WTC11 (cell line): ENCODE measurements at regions of chr16 and their contacts with region 1.

Region 1: DNA sequence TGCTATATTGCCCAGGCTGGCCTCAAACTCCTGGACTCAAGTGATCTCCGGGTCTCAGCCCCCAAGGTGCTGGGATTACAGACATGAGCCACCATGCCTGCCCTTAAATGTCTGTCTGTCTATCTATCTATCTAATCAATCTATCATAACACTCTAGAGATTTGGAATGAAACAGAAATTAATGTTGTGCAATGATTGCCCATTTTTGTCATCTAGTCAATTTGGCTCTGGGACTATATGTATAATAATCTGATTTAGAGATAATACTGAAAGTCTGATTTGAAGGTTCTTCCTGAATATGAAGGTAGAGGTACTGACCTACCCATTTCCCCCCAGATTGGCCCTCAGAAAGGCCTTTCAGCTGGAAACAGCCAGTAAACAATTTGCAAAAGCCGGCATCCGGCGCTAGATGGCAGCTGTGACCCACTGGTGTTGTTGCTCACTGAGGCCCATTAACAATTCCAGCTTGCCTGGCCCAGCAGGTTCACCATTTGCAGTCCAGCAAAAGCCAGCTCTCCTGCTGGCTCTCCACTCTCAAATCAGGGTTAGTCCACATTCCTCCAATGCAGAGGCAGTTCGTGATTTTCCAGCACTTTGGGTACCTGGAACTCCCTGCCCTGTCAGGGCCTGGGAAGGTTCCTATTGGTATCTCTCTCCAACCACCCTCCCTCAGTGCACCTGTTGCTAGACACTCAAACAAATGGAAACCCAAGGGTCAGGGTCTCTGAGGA is 22.9 kb upstream of the C16orf87 start:
- DNase-seq: peak; percentile 90
- ATAC-seq: peak; percentile 87
- H3K4me3 Mint-ChIP-seq: no peak overlapping the region
- H3K27ac Mint-ChIP-seq: peak overlapping the region; percentile 85; the same call in 1 of the 2 replicates
- H3K4me1 Mint-ChIP-seq: peaks cover 27% of the 10 kb centered on the region
- H3K27me3 Mint-ChIP-seq: no peaks in the 10 kb centered on the region
- CTCF ChIP-seq: peak; percentile 46

Region 2: GRCh38 chr16:46673320-46674013 is 180.4 kb before region 1 on chr16:
- CTCF ChIA-PET with region 1: interaction called, 22 read pairs
- POLR2A ChIA-PET with region 1: no interaction called
- DNase-seq: peak; percentile 62
- ATAC-seq: peak; percentile 100
- H3K4me3 Mint-ChIP-seq: no peak overlapping the region
- H3K27ac Mint-ChIP-seq: peak overlapping the region; percentile 3
- H3K4me1 Mint-ChIP-seq: no peaks in the 10 kb centered on the region
- H3K27me3 Mint-ChIP-seq: no peaks in the 10 kb centered on the region
- CTCF ChIP-seq: peak; percentile 87

Region 3: GRCh38 chr16:46715769-46716305 is 138.0 kb before region 1 on chr16:
- CTCF ChIA-PET with region 1: no interaction called
- POLR2A ChIA-PET with region 1: no interaction called
- DNase-seq: no peak
- ATAC-seq: no peak
- H3K4me3 Mint-ChIP-seq: no peak overlapping the region
- H3K27ac Mint-ChIP-seq: no peak overlapping the region
- H3K4me1 Mint-ChIP-seq: no peaks in the 10 kb centered on the region
- H3K27me3 Mint-ChIP-seq: no peaks in the 10 kb centered on the region
- CTCF ChIP-seq: no peak

Region 4: GRCh38 chr16:46883690-46884512 is 30.0 kb after region 1 on chr16 and contains the start of gene GPT2:
- CTCF ChIA-PET with region 1: interaction called, 54 read pairs
- POLR2A ChIA-PET with region 1: interaction called, 7 read pairs
- DNase-seq: peak; percentile 100
- ATAC-seq: peak; percentile 97
- H3K4me3 Mint-ChIP-seq: peak within 1 kb of the TSS; percentile 92
- H3K27ac Mint-ChIP-seq: peak within 1 kb of the TSS; percentile 95
- H3K4me1 Mint-ChIP-seq: peaks cover 52% of the 10 kb centered on the region
- H3K27me3 Mint-ChIP-seq: no peaks in the 10 kb centered on the region
- CTCF ChIP-seq: no peak
- total RNA-seq, gene GPT2: 61.0 to 81.8 TPM (median 63.1 TPM) in 3 replicates

Region 5: DNA sequence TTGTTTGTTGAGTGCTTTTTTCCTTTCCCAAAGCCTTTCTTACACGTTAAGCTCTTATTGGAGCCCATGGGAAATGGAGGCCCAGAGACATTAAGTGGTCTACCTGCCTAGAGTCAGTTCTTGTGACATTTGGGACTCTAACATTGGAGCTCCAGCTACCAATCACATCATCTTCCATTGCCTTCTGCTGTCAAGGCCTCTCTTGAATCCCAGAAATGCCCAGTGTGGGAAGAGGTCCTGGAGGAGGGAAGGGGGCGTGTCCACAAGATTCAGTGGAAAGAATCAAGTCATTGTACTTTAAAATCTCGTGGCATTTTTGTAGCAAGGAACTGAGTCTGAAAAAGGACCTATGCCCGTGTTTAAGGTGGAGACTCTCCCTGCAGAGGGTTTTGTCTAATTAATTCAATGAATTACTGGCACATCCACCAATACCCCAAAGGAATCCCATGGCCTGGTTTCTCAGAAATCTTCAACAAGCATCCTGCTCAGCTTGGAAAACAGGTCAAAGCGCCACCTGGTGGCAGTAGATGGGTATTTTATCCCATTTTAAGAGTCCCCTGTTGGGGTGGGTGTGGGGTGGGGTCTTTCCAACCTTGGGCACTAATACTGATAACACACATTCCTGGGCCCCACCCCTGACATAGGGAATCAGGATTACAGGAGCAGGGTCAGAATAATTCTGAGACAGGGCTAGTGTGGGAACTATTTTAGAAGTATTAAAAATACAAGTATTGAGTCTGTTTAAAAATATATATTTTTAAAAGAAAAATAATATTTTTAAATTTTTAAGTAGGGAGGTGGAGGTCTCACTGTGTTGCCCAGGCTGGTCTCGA is 54.9 kb after region 1 on chr16:
- CTCF ChIA-PET with region 1: interaction called, 146 read pairs
- POLR2A ChIA-PET with region 1: interaction called, 5 read pairs
- DNase-seq: peak; percentile 81
- ATAC-seq: peak; percentile 82
- H3K4me3 Mint-ChIP-seq: no peak overlapping the region
- H3K27ac Mint-ChIP-seq: peak overlapping the region; percentile 59
- H3K4me1 Mint-ChIP-seq: peaks cover 6% of the 10 kb centered on the region; the same call in 1 of the 2 replicates
- H3K27me3 Mint-ChIP-seq: no peaks in the 10 kb centered on the region
- CTCF ChIP-seq: peak; percentile 89

Region 6: DNA sequence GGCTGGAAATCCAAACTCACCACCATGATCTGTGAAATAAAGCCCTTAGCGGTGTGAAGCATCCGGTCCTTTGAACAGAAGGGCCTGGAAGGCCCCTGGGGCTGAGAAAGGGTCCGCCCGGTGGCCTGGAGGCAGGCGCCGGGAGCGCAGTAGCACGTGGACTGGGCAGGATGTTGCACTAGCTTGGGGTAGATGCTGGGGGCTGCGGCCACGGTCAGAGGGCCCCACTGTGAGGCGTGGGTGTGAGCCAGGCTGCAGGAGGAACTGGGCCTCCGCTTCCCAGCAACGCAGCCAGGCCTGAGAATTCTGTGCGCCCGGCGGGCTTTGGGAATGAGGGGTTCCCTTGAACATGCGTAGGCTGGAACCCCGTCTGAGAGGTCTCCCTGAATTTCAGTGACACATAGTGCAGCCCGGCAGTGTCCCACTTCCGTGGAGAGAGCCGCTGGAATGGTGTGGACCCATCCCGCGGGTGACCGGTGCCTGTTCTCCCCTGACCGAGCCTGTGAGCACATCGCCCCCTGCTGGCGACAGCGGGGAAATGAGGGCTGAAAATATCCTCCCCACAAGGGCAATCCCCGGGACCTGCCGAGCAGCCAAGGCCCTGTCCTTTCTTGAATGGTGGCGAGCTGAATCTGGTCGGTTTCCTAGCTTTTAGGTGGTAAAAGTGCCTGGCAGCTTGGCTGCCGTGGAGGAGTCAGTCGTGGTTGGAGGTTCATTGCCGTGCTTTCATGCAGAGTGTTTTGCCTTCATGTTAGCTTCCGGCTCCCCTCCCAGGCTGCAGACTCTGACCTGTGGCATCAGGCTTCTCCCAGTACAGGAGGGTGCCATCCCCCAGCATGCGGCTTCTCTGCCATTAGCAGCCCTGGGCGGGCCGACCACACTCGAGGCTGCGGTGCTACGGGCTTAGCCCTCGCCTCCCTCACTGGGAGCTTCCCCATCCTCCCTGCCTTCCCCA is 75.8 kb after region 1 on chr16:
- CTCF ChIA-PET with region 1: interaction called, 14 read pairs
- POLR2A ChIA-PET with region 1: interaction called, 4 read pairs
- DNase-seq: peak; percentile 84
- ATAC-seq: peak; percentile 78
- H3K4me3 Mint-ChIP-seq: no peak overlapping the region
- H3K27ac Mint-ChIP-seq: no peak overlapping the region
- H3K4me1 Mint-ChIP-seq: peaks cover 6% of the 10 kb centered on the region
- H3K27me3 Mint-ChIP-seq: no peaks in the 10 kb centered on the region
- CTCF ChIP-seq: peak; percentile 90

Region 7: DNA sequence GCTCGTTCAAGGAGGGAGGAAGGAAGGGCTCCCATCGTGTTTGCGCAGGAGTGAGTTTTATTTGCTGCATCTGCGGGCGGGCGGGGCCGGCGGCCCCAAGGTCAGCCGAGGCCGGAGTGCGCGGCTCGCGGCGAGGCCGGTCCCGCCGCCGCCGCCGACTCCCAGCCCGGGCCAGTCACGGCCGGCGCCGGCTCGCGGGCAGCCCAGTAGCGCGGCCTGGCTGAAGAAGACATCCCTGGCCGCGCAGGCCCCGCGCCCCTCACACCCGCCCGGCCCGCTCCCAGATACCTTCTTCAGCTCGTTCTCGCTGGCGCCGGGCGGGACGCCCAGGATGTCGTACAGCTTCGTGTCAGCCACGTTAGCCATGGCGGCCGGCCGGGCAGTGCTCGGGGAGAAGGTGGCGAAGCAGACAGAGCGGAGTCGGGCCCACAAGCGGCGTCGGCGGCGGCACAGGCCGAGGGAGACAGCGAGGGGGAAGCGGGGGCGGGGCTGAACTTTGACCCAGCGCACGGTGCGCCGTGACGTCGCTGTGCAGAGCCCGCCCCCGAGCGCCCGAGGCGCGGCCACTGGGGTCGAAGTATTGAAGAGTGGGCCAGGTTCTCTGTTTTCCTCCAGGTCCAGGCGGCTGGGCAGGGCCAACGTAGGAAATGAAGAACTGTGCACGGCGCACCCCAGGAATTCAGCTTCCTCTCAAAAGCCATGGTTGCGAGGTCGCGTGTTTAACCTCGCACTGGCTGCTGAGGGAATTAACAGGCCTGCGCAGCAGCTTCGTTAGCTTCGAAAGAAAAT is 119.5 kb after region 1 on chr16 and contains the start of gene DNAJA2:
- CTCF ChIA-PET with region 1: interaction called, 11 read pairs
- POLR2A ChIA-PET with region 1: interaction called, 3 read pairs
- DNase-seq: peak; percentile 89
- ATAC-seq: peak; percentile 94
- H3K4me3 Mint-ChIP-seq: peak within 1 kb of the TSS; percentile 90
- H3K27ac Mint-ChIP-seq: peak within 1 kb of the TSS; percentile 99
- H3K4me1 Mint-ChIP-seq: peaks cover 52% of the 10 kb centered on the region
- H3K27me3 Mint-ChIP-seq: no peaks in the 10 kb centered on the region
- CTCF ChIP-seq: no peak
- total RNA-seq, gene DNAJA2: 101 to 103 TPM (median 102 TPM) in 3 replicates